ENCODE measurements at regions of chr5 and their contacts with region 1.

Region 1: GRCh38 chr5:145408048-145408341 is 427.1 kb downstream of the PRELID2 start:
- DNase-seq: no peak
- H3K4me3 ChIP-seq: no peak overlapping the region
- H3K27ac ChIP-seq: no peak overlapping the region
- H3K4me1 ChIP-seq: no peaks in the 10 kb centered on the region
- H3K27me3 ChIP-seq: no peaks in the 10 kb centered on the region
- CTCF ChIP-seq: no peak
- POLR2A ChIP-seq: no peak

Region 2: DNA sequence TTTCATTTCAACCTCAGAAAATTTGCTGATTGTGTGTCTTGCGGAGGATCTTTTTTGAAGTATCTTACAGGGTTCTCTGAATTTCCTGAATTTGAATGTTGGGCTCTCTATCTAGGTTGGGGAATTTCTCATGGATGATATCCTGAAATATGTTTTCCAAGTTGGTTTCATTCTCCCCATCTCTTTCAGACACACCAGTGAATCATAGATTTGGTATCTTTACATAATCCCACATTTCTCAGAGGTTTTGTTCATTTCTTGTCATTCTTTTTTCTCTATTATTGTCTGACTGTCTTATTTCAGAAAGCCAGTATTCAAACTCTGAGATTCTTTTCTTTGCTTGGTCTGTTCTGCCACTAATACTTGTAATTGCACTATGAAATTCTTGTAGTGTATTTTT is 29.8 kb before region 1 on chr5:
- intact Hi-C with region 1: loop called (anchors 2 kb)
- DNase-seq: no peak
- H3K4me3 ChIP-seq: no peak overlapping the region
- H3K27ac ChIP-seq: no peak overlapping the region
- H3K4me1 ChIP-seq: no peaks in the 10 kb centered on the region
- H3K27me3 ChIP-seq: no peaks in the 10 kb centered on the region
- CTCF ChIP-seq: no peak
- POLR2A ChIP-seq: no peak

Measured in thyroid gland (tissue), 4 donors.